CD8-positive, alpha-beta T cell (primary cell): ENCODE measurements at regions of chr6 and their contacts with region 1.

Region 1: GRCh38 chr6:96923871-96924493 is 546 bp upstream of the KLHL32 start:
- DNase-seq: peak in 3 of 9 experiments; percentile 1 to 83 (median 75)
- ATAC-seq: no peak
- H3K4me3 ChIP-seq: peak overlapping the region; percentile 64 to 76
- H3K4me3 Mint-ChIP-seq: peak overlapping the region; percentile 96
- H3K27ac ChIP-seq: peak overlapping the region; percentile 92 to 96
- H3K27ac Mint-ChIP-seq: peak overlapping the region; percentile 98
- H3K4me1 ChIP-seq: peaks cover 32% of the 10 kb centered on the region
- H3K4me1 Mint-ChIP-seq: peaks cover 32% of the 10 kb centered on the region
- H3K27me3 ChIP-seq: no peaks in the 10 kb centered on the region
- H3K27me3 Mint-ChIP-seq: no peaks in the 10 kb centered on the region
- CTCF ChIP-seq: no peak

Region 2: DNA sequence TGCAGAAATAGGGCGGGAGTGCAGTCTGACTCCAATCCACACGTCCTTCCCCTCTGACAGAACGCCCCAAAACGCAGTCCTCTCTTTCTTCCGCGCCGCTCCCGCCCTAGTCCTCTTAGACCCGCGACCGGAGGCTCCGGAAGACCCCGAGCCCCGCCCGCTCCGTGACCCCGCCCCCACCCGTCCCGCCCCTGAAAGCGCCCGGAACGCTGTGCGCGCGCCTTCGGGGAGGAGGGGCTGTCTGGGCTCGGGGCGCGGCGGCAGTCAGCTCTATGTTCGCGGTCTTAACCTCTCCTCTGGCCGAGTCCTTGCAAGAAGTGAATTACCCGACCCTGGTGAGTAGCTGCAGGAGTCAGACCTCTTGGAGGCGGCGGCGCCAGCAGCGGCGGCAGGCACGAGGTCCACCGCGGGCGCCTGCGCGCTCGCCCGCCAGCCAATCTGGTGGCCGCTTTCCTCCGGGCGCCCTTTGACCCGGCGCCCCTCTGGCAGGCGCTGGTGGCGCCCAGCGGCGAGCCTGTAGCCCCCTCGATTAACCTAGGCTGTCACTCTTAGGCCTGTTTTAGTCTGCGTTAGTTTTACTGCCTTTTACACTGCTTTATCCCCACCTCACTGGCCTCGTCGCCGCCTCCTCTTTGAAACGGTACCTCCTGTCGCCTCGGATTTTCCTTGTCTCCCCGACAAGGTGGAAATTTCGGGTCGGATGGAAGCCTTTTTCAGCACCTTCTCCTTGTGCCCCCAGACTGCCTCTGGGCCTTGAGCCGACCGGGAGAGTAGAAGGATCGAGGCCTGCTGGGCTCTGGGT is 1346.5 kb before region 1 on chr6 and contains the start of gene MANEA:
- CTCF ChIA-PET with region 1: interaction called, 4 read pairs
- POLR2A ChIA-PET with region 1: no interaction called
- intact Hi-C with region 1: loop called (anchors 1 to 10 kb)
- DNase-seq: peak; percentile 69 to 91 (median 81)
- ATAC-seq: peak; percentile 84
- H3K4me3 ChIP-seq: peak within 1 kb of the TSS; percentile 70 to 89
- H3K4me3 Mint-ChIP-seq: peak within 1 kb of the TSS; percentile 94
- H3K27ac ChIP-seq: peak within 1 kb of the TSS; percentile 85 to 89
- H3K27ac Mint-ChIP-seq: peak within 1 kb of the TSS; percentile 98
- H3K4me1 ChIP-seq: peaks cover 30% of the 10 kb centered on the region
- H3K4me1 Mint-ChIP-seq: peaks cover 62% of the 10 kb centered on the region
- H3K27me3 ChIP-seq: no peaks in the 10 kb centered on the region
- H3K27me3 Mint-ChIP-seq: no peaks in the 10 kb centered on the region
- CTCF ChIP-seq: no peak
- total RNA-seq, gene MANEA: 5.3 to 6.0 TPM

Region 3: DNA sequence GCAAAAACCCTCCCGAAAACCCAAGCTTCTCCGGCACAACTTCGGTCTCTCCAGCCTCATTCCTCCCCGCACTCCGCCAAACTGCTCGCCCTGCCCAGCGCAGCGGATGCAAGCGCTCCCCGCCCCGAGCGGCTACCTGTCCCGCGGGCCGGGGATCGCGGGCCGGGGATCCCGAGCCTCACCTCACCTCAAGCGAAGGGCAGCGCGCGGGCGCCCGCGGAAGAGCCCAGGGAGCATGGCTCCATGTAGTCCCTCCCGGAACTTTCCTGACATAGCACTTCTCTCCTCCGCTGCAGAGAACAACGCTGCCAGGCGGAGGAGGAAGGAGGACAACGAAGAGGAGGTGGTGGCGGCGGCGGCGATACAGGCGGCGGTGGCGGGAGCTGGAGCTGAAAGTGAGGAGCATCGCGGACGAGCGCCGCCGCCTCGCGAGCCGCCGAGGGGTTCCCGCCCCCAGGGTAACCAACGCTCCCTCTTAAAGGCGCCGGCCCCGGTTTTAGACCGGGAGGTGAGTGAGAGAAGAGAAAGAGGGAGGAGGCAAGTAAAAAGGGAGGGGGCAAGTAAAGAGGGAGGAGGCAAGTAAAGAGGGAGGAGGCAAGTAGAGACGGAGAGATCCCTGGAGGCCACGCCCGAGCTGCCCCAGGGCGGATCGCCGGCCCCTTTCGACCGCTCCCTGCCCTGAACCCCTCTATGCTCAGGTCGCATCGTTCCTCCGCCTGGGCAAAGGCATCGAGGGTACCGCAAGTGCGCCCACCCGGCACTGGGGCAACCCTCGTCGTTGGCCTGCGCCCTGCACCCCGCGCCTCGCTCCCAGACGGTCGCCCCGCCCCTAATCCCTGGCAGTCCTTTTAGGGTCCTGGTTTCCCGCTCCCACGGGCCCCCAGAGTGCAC is 86.7 kb before region 1 on chr6 and contains the start of gene GPR63:
- CTCF ChIA-PET with region 1: no interaction called
- POLR2A ChIA-PET with region 1: interaction called, 4 read pairs
- intact Hi-C with region 1: loop called in 1 of 2 experiments (anchors 5 kb)
- DNase-seq: peak in 8 of 9 experiments; percentile 24 to 76 (median 55)
- ATAC-seq: peak; percentile 79
- H3K4me3 ChIP-seq: peak within 1 kb of the TSS; percentile 65 to 74
- H3K4me3 Mint-ChIP-seq: peak within 1 kb of the TSS; percentile 82
- H3K27ac ChIP-seq: no peak within 1 kb of the TSS
- H3K27ac Mint-ChIP-seq: peak within 1 kb of the TSS; percentile 6
- H3K4me1 ChIP-seq: peaks cover 15% of the 10 kb centered on the region
- H3K4me1 Mint-ChIP-seq: peaks cover 16% of the 10 kb centered on the region
- H3K27me3 ChIP-seq: peaks cover 0 to 12% of the 10 kb centered on the region in 2 experiments
- H3K27me3 Mint-ChIP-seq: peaks cover 44% of the 10 kb centered on the region
- CTCF ChIP-seq: no peak
- total RNA-seq, gene GPR63: not detected